Posterior vena cava (tissue), 2 donors: ENCODE measurements at regions of chr5 and their contacts with region 1.

Region 1: GRCh38 chr5:93088592-93089389 is 492.2 kb downstream of the NR2F1-AS1 start:
- DNase-seq: no peak

Region 2: GRCh38 chr5:93141969-93142368 is 53.2 kb after region 1 on chr5:
- intact Hi-C with region 1: no loop called
- DNase-seq: no peak

Region 3: DNA sequence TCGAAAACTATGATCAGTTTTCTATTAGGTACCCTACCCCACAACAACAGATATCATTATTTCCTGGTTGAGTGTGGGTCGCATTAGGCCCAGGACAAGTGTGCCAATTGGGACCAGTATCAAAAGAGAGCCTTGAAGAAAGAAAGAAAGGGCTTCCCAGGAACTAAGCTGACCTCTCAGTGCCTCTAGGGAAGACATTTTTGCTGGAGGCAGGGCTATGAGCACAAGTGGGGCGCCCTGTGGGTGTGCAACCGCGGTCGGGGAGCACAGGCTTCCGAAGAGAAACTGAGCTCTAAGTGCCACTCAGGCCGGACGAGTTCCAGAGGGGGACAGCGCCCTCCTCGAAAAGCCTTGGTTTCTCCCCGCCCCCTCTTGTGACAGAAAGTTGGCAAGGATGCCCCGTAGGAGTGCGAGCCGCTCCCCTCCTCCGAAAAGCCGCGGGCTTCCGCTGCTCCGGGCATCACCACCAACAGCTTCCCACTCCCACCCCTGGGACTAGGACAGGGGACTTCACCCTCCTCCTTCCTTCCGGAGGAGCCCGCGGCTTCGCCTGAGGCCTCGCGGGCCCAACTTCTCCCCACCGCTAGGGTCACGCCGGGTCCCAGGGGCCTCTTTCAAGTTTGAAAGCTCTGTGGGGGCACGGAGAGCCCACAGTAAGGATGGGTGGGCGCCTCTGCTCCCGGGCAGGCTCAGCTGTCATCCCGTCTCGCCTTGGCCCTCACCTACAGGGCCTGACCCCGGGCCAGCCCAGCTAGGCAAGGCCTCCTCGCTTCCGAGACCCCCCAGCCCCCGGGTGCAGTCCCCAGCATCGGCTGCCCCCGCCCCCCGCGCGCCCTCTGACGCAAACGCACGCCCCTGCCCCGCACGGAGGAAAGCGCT is 490.3 kb after region 1 on chr5:
- intact Hi-C with region 1: loop called in 1 of 2 experiments (anchors 10 kb)
- DNase-seq: peak; percentile 89